ENCODE measurements at regions of chr18 and their contacts with region 1.

Region 1: GRCh38 chr18:58493516-58494253 is 135.2 kb downstream of the ALPK2 start:
- DNase-seq: peak; percentile 66
- ATAC-seq: peak; percentile 90 to 91

Region 2: GRCh38 chr18:58180738-58181353 is 312.8 kb before region 1 on chr18:
- intact Hi-C with region 1: loop called in 1 of 2 experiments (anchors 10 kb)
- DNase-seq: no peak
- ATAC-seq: peak in 1 of 2 donors; percentile 29

Region 3: DNA sequence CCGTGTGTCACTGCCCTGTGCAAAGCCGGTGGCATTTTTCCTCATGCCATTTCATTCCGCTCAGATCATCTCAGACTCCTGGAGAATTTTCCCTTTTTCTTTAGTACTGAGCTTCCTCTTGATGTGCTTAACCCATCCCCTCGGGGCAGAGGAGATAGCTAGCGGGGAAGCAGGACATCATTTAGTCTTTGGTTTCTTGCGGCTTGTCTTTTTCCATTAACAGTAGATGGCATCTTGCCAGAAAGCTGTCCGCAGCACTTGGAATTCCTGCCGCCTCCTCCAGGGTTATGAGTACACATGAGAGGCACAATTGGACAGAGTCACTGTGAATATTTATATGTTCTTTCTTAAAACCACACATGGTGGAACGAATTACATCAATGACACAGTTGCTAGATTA is 91.4 kb before region 1 on chr18:
- intact Hi-C with region 1: loop called in 1 of 2 experiments (anchors 5 kb)
- DNase-seq: no peak
- ATAC-seq: peak; percentile 55